Left lung (tissue), 14 donors: ENCODE measurements at regions of chr2 and their contacts with region 1.

Region 1: GRCh38 chr2:24315669-24316068 is 44.7 kb downstream of the ITSN2 start:
- DNase-seq: no peak
- ATAC-seq: no peak
- H3K4me3 ChIP-seq: no peak overlapping the region
- H3K27ac ChIP-seq: no peak overlapping the region
- H3K4me1 ChIP-seq: peaks cover 0 to 12% of the 10 kb centered on the region in 2 donors
- H3K27me3 ChIP-seq: no peaks in the 10 kb centered on the region
- CTCF ChIP-seq: no peak

Region 2: DNA sequence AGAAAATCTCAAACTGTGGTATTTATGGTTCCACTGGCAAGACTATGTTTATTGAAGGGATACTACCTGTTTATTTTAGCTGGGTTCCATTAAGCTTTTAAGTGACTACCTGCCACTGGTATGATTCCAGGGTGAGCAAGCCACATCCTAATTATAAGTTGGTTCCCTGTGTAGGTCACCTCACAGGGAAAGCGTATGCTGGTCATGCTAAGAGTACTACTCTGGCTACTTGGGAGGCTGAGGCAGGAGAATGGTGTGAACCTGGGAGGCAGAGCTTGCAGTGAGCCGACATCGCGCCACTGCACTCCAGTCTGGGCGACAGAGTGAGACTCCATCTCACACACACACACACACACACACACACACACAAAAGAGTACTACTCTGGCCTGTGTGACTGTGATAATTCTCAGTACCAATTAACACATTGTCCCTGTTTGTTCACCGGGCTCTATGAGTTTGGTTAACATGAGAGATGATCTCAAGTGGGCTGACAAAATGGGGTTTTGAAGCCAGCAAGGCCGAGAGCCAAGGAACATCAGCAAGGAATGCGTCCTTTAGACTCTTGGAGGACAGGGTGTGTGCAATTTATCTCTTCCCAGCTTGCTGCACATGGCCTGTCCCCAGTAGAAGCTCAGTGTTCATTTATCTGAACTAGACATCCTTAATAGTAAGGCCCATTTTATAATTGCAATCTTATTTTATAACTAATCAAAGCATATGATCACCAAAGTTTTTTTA is 59.8 kb after region 1 on chr2:
- intact Hi-C with region 1: loop called in 1 of 2 experiments (anchors 10 kb)
- DNase-seq: no peak
- ATAC-seq: no peak
- H3K4me3 ChIP-seq: no peak overlapping the region
- H3K27ac ChIP-seq: no peak overlapping the region
- H3K4me1 ChIP-seq: no peaks in the 10 kb centered on the region
- H3K27me3 ChIP-seq: no peaks in the 10 kb centered on the region
- CTCF ChIP-seq: no peak